ENCODE measurements at regions of chr9 and their contacts with region 1.

Region 1: DNA sequence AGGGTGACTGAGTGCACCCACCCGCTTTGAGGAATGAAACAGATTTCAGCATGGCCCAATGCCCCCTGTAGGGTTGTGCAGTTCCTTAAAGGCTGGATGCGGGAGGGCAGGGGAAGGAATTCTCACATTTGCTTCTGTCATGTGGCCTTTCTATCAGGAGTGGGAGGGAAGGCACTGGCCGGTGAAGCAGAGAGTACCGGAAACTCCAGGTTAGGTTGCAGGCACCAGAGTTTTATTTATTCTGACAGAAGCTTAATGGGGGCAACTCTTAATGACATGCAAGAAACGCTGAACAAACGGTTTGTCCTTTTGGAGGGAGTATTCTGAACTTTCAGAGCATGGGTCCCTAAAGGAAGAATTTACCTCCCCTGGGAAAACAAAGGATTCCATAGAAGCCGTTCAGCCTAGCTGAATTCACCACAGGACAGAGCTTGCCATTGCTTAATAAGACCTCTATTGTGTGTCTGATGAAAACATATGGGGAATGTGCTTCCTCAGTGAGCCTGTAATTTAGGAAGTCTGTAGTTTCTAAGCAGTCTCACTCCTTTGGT is 44.1 kb upstream of the EQTN start:
- DNase-seq: no peak
- ATAC-seq: peak in 1 of 4 donors; percentile 24
- H3K4me3 ChIP-seq: no peak overlapping the region
- H3K27ac ChIP-seq: peak overlapping the region in 2 of 12 donors; percentile 3 to 53
- H3K4me1 ChIP-seq: peaks cover 0 to 47% (median 16%) of the 10 kb centered on the region in 12 donors
- H3K27me3 ChIP-seq: no peaks in the 10 kb centered on the region
- CTCF ChIP-seq: no peak
- POLR2A ChIP-seq: no peak

Region 2: GRCh38 chr9:27261517-27262211 is 79.4 kb before region 1 on chr9:
- intact Hi-C with region 1: no loop called
- DNase-seq: no peak
- ATAC-seq: no peak
- H3K4me3 ChIP-seq: no peak overlapping the region
- H3K27ac ChIP-seq: no peak overlapping the region
- H3K4me1 ChIP-seq: no peaks in the 10 kb centered on the region
- H3K27me3 ChIP-seq: no peaks in the 10 kb centered on the region
- CTCF ChIP-seq: no peak
- POLR2A ChIP-seq: no peak

Region 3: GRCh38 chr9:27394154-27394825 is 53.3 kb after region 1 on chr9:
- intact Hi-C with region 1: loop called in 1 of 10 experiments (anchors 5 kb)
- DNase-seq: peak in 1 of 5 donors; percentile 11
- ATAC-seq: peak; percentile 41 to 85 (median 74)
- H3K4me3 ChIP-seq: no peak overlapping the region
- H3K27ac ChIP-seq: peak overlapping the region in 3 of 12 donors; percentile 5 to 25 (median 24)
- H3K4me1 ChIP-seq: peaks cover 0 to 39% (median 16%) of the 10 kb centered on the region in 12 donors
- H3K27me3 ChIP-seq: no peaks in the 10 kb centered on the region
- CTCF ChIP-seq: no peak
- POLR2A ChIP-seq: no peak

Region 4: DNA sequence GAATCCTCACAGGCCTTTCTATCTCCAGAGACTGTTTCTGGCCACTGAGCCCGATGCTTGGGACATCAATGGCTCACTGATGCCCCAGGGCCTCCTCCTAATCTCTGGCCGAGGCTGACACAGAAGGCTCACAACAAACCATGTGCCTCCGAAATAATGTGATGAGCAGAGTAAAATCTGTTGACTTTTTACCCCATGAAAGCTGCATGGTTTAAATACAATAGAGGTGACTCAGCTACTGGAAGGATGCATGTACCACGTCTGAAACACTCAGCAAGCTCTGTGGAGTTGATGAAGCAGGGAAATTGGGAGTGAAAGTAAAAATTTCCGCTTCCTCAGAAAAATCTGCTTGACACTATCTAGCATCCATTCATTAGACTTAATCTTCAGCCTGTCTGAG is 67.0 kb after region 1 on chr9:
- intact Hi-C with region 1: no loop called
- DNase-seq: no peak
- ATAC-seq: peak in 1 of 4 donors; percentile 22
- H3K4me3 ChIP-seq: no peak overlapping the region
- H3K27ac ChIP-seq: peak overlapping the region in 1 of 12 donors; percentile 6
- H3K4me1 ChIP-seq: peaks cover 0 to 24% (median 6%) of the 10 kb centered on the region in 12 donors
- H3K27me3 ChIP-seq: no peaks in the 10 kb centered on the region
- CTCF ChIP-seq: no peak
- POLR2A ChIP-seq: no peak

Region 5: DNA sequence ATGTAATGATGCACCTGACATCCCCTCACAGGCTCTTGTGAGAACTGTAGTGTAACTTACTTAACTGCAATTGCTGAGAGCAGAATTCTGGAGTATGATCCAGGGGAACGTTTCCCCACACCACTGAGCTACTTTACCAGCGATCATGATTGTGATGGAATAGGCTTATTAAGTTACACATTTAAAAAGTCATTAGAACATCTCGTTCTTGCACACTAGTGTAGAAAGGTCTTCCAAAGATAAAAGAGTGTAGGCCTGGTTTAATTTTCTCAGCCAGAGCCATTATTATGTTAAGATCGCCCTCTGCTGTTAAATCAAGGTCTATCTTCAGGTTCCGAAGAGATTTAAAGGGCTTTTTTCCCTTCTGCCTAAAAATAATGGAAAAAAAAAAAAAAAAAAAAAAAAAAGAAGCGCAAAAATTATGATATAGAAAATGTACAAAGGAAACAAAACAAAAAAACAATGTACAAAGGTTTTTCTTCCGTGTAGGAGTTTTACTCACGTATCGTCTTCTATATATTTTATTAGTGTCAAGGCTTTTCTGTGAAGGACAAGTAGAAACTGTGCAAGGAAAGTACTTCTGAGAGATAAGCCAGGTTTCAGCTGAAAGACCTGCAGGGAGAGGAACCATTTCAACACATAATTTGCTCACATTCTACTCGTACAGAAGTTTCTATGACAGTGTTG is 207.2 kb after region 1 on chr9:
- intact Hi-C with region 1: loop called in 1 of 10 experiments (anchors 5 kb)
- DNase-seq: no peak
- ATAC-seq: peak; percentile 77 to 88 (median 84)
- H3K4me3 ChIP-seq: no peak overlapping the region
- H3K27ac ChIP-seq: peak overlapping the region in 3 of 12 donors; percentile 2 to 39 (median 34)
- H3K4me1 ChIP-seq: peaks cover 0 to 6% (median 0%) of the 10 kb centered on the region in 12 donors
- H3K27me3 ChIP-seq: no peaks in the 10 kb centered on the region
- CTCF ChIP-seq: peak; percentile 25 to 67 (median 54)
- POLR2A ChIP-seq: no peak

Region 6: DNA sequence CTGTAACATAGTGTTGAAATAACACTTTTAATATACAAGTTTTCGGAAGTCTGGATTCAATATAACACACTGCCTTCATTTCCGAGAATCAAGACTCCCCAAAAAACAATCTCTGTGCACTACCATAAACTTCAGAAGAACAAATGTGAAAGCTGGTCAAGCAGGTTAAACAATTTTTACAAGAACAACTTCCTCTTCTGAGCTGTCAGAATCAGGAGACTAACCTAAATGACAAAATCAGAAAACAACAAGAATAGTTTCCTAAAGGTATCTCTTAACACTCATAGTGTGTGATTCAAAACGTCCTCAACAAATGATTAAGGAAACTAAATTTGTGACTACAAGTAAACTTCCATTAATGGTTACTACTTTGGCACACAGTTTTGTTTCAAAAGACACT is 220.6 kb after region 1 on chr9:
- intact Hi-C with region 1: no loop called
- DNase-seq: no peak
- ATAC-seq: no peak
- H3K4me3 ChIP-seq: no peak overlapping the region
- H3K27ac ChIP-seq: no peak overlapping the region
- H3K4me1 ChIP-seq: peaks cover 0 to 17% (median 0%) of the 10 kb centered on the region in 12 donors
- H3K27me3 ChIP-seq: no peaks in the 10 kb centered on the region
- CTCF ChIP-seq: no peak
- POLR2A ChIP-seq: no peak

Region 7: GRCh38 chr9:28179893-28180292 is 838.9 kb after region 1 on chr9:
- intact Hi-C with region 1: no loop called
- DNase-seq: no peak
- ATAC-seq: no peak
- H3K4me3 ChIP-seq: no peak overlapping the region
- H3K27ac ChIP-seq: no peak overlapping the region
- H3K4me1 ChIP-seq: no peaks in the 10 kb centered on the region
- H3K27me3 ChIP-seq: peaks cover 0 to 5% (median 0%) of the 10 kb centered on the region in 9 donors
- CTCF ChIP-seq: no peak
- POLR2A ChIP-seq: no peak